Right cardiac atrium (tissue), 5 donors: ENCODE measurements at regions of chr3 and their contacts with region 1.

Region 1: DNA sequence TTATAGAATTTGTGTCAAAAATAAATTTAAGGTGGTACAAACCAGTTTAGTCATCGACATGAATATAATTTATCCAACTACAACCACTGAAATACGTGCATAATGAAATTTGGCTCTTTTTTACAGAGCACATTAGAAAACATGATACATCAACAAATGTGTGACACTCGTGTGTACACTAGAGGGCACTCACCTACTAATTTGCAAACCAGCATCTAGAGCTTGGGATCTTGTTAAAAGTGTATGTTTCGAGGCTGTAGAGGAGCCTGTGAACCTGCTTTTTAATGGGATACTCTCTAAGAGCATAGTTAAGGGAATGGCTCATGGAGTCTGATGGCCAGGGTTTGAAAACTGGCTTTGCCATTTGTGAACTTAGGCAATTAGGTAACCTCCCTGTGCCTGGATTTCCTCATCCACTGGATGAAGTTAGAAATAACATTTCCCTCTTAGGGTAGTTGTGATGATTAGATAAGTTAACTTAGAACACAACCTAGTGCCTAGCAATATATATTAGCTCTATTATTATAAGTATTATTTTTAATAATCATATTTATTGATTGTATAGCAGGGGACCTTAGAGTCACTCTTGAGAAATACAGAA is 8.8 kb upstream of the CPOX start:
- DNase-seq: no peak
- ATAC-seq: peak; percentile 69 to 76
- H3K4me3 ChIP-seq: no peak overlapping the region
- H3K27ac ChIP-seq: no peak overlapping the region
- H3K4me1 ChIP-seq: no peaks in the 10 kb centered on the region
- H3K27me3 ChIP-seq: no peaks in the 10 kb centered on the region

Region 2: GRCh38 chr3:98710033-98710659 is 108.0 kb after region 1 on chr3:
- intact Hi-C with region 1: no loop called
- DNase-seq: no peak
- ATAC-seq: peak; percentile 54 to 57
- H3K4me3 ChIP-seq: no peak overlapping the region
- H3K27ac ChIP-seq: no peak overlapping the region
- H3K4me1 ChIP-seq: no peaks in the 10 kb centered on the region
- H3K27me3 ChIP-seq: no peaks in the 10 kb centered on the region

Region 3: DNA sequence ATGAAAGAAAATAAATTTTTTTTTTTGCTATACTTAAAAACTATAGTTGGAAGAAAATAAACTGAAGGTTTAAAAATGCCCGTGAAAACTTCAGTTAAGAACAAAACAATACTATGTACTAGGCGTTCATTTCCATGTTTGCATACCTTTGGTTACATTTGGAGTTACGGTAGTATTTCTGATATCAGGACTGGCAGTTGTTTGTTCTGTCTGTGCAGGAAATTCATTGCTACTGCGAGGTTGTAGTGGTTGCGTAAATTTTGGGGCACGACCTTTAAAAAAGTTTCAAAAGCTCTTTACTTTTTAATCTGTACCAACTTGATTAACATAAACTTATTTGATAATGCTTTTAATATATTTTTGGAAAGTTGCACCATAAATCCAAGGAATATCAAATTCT is 208.9 kb after region 1 on chr3:
- intact Hi-C with region 1: loop called (anchors 2 to 5 kb)
- DNase-seq: no peak
- ATAC-seq: no peak
- H3K4me3 ChIP-seq: no peak overlapping the region
- H3K27ac ChIP-seq: no peak overlapping the region
- H3K4me1 ChIP-seq: no peaks in the 10 kb centered on the region
- H3K27me3 ChIP-seq: no peaks in the 10 kb centered on the region

Region 4: GRCh38 chr3:98817547-98818041 is 215.4 kb after region 1 on chr3:
- intact Hi-C with region 1: loop called in 3 of 4 experiments (anchors 2 to 5 kb)
- DNase-seq: no peak
- ATAC-seq: peak; percentile 67 to 77
- H3K4me3 ChIP-seq: no peak overlapping the region
- H3K27ac ChIP-seq: no peak overlapping the region
- H3K4me1 ChIP-seq: no peaks in the 10 kb centered on the region
- H3K27me3 ChIP-seq: no peaks in the 10 kb centered on the region

Region 5: DNA sequence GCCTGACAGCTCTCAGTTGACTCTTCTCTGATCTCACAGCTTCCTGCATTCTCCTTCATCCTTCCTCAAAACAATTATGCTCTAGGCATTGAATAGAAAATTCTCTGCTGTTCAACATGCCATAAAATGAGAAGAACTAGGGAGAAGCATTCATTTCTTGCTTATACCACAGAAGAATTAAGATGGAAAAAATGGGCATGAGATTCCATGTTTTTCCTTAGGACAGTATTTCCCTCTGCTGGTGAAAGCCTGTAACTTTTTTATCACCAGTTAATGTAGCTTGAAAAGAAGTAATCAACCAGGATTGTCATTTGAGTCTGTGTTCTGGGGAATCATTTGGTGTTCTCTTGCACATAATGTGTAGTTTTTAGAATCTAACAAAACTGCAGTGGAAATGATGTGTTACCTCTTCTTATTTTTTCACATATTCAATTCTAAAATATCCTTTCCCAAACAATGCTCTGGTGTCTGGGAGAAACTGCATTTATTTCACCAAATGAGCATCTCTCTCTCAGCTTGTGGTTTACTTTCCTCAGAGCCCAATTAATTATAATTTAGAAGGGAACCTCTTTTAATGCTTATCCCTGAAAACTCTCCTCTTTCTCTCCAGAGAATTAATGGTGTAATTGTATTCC is 392.1 kb after region 1 on chr3:
- intact Hi-C with region 1: loop called in 3 of 4 experiments (anchors 5 to 10 kb)
- DNase-seq: no peak
- ATAC-seq: peak in 1 of 2 donors; percentile 34
- H3K4me3 ChIP-seq: no peak overlapping the region
- H3K27ac ChIP-seq: no peak overlapping the region
- H3K4me1 ChIP-seq: no peaks in the 10 kb centered on the region
- H3K27me3 ChIP-seq: no peaks in the 10 kb centered on the region